ENCODE measurements at regions of chr6 and their contacts with region 1.

Region 1: DNA sequence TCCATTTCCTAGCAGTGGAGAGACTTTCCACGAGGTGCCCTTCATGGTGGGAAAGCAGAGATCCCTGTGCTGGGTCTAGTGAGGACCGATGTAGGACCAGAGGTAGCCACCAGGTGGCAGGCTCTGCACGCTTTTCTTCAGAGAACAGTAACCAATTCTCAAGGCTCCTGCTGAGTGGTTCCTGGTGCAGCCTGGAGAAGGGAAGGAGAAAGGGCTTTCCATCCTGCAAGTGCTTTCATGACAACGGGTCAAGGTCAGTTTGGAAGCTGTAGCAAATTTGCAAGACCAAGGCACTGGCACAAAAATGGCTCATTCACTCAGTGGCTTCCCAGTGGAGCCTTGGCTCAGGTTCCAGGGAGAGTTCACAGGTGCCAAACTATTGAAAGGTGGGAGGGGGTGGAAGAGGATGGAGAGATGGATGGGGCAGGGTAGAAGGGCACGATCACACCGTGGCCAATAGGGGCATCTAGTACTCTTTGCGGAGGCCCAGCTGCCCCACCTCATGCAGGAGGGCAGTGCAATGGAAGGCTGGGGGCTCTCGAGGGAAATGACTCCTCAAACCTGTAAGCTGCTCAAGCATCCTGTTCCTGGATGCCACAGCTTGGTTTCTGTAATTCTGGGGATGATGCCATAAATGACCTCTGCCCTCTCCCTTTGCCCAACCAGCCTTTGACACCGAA is 25.5 kb upstream of the KCNK16 start:
- DNase-seq: peak; percentile 31
- H3K4me3 Mint-ChIP-seq: no peak overlapping the region
- H3K27ac Mint-ChIP-seq: no peak overlapping the region
- H3K4me1 Mint-ChIP-seq: no peaks in the 10 kb centered on the region
- H3K27me3 Mint-ChIP-seq: peaks cover 6% of the 10 kb centered on the region

Region 2: GRCh38 chr6:39892490-39893129 is 544.6 kb after region 1 on chr6:
- intact Hi-C with region 1: loop called (anchors 1 kb)
- DNase-seq: no peak
- H3K4me3 Mint-ChIP-seq: no peak overlapping the region
- H3K27ac Mint-ChIP-seq: no peak overlapping the region
- H3K4me1 Mint-ChIP-seq: no peaks in the 10 kb centered on the region
- H3K27me3 Mint-ChIP-seq: peaks cover 6% of the 10 kb centered on the region